Panc1 (cell line): ENCODE measurements at regions of chr15 and their contacts with region 1.

Region 1: GRCh38 chr15:80242132-80242769 is 9.8 kb downstream of the CTXND1 start:
- DNase-seq: no peak
- ATAC-seq: peak; percentile 66; the same call in 1 of the 2 replicates
- H3K4me3 ChIP-seq: no peak overlapping the region
- H3K27ac ChIP-seq: no peak overlapping the region
- H3K4me1 ChIP-seq: no peaks in the 10 kb centered on the region
- H3K27me3 ChIP-seq: peaks cover 5% of the 10 kb centered on the region
- CTCF ChIP-seq: peak; percentile 79

Region 2: GRCh38 chr15:80309769-80310384 is 67.6 kb after region 1 on chr15:
- CTCF ChIA-PET with region 1: no interaction called
- POLR2A ChIA-PET with region 1: no interaction called
- in situ Hi-C with region 1: no loop called
- intact Hi-C with region 1: loop called (anchors 2 kb)
- DNase-seq: no peak
- ATAC-seq: peak; percentile 69; the same call in 1 of the 2 replicates
- H3K4me3 ChIP-seq: no peak overlapping the region
- H3K27ac ChIP-seq: no peak overlapping the region
- H3K4me1 ChIP-seq: no peaks in the 10 kb centered on the region
- H3K27me3 ChIP-seq: peaks cover 6% of the 10 kb centered on the region; the same call in 1 of the 2 replicates
- CTCF ChIP-seq: peak; percentile 64

Region 3: DNA sequence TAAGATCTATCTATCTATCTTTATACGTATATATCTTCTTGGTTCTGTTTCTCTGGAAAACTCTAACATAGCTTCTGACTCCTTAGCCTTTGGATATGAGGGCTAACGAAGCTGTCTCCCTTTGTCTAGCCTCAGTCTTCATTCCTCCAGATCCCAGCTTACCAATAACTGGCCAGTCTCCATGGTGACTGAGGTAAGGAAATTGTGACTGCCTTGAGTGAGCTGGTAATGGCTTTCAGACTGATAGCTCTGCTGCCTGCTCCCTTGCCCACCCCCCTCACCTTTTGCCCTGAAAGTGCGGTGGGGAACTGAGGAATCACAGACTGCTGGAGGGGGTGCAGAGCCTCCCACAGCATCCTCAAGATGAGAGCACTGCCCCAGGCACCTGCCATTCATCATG is 387.1 kb after region 1 on chr15:
- CTCF ChIA-PET with region 1: no interaction called
- POLR2A ChIA-PET with region 1: no interaction called
- in situ Hi-C with region 1: no loop called
- intact Hi-C with region 1: no loop called
- DNase-seq: no peak
- ATAC-seq: no peak
- H3K4me3 ChIP-seq: no peak overlapping the region
- H3K27ac ChIP-seq: no peak overlapping the region
- H3K4me1 ChIP-seq: no peaks in the 10 kb centered on the region
- H3K27me3 ChIP-seq: no peaks in the 10 kb centered on the region
- CTCF ChIP-seq: no peak